Activated CD4-positive, alpha-beta T cell treated with anti-CD3 and anti-CD28 coated beads for 36 hours (primary cell): ENCODE measurements at regions of chr1 and their contacts with region 1.

Region 1: GRCh38 chr1:40979233-40980067 is at the start of gene CTPS1:
- DNase-seq: peak; percentile 98
- ATAC-seq: peak; percentile 86
- H3K4me3 Mint-ChIP-seq: peak within 1 kb of the TSS; percentile 86
- H3K27ac Mint-ChIP-seq: peak within 1 kb of the TSS; percentile 95
- H3K4me1 Mint-ChIP-seq: peaks cover 47% of the 10 kb centered on the region
- H3K27me3 Mint-ChIP-seq: no peaks in the 10 kb centered on the region
- total RNA-seq, gene CTPS1: 89.5 to 106 TPM

Region 2: GRCh38 chr1:40385437-40386358 is 593.8 kb before region 1 on chr1:
- CTCF ChIA-PET with region 1: no interaction called
- POLR2A ChIA-PET with region 1: no interaction called
- intact Hi-C with region 1: loop called in 1 of 2 experiments (anchors 5 kb)
- DNase-seq: peak; percentile 77
- ATAC-seq: peak; percentile 63
- H3K4me3 Mint-ChIP-seq: peak overlapping the region; percentile 74
- H3K27ac Mint-ChIP-seq: peak overlapping the region; percentile 100
- H3K4me1 Mint-ChIP-seq: peaks cover 94% of the 10 kb centered on the region
- H3K27me3 Mint-ChIP-seq: no peaks in the 10 kb centered on the region

Region 3: DNA sequence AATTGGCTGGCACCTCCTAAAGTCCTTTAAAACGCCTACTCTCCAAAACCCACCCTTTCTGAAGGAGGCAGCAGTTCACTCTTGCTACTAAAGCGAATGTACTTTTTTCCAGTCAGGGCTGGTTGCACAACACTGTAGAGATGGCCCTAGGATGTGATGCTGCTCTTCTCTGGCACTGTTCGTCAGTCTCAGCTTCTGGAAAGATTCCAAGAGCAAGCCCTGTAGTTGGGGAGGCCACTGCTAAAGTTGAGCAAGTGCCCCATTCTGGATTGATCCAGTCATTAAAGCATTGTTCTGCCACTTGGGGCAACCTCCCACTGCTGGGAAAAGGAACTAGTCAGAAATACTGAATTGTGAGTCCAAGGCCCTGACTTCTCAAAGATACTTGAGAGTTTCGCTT is 224.4 kb before region 1 on chr1:
- CTCF ChIA-PET with region 1: no interaction called
- POLR2A ChIA-PET with region 1: no interaction called
- intact Hi-C with region 1: loop called in 1 of 2 experiments (anchors 1 kb)
- DNase-seq: no peak
- ATAC-seq: no peak
- H3K4me3 Mint-ChIP-seq: no peak overlapping the region
- H3K27ac Mint-ChIP-seq: no peak overlapping the region
- H3K4me1 Mint-ChIP-seq: peaks cover 27% of the 10 kb centered on the region
- H3K27me3 Mint-ChIP-seq: no peaks in the 10 kb centered on the region

Region 4: GRCh38 chr1:40951943-40952743 is 27.3 kb before region 1 on chr1:
- CTCF ChIA-PET with region 1: interaction called, 10 read pairs
- POLR2A ChIA-PET with region 1: no interaction called
- intact Hi-C with region 1: no loop called
- DNase-seq: peak; percentile 75
- ATAC-seq: peak; percentile 72
- H3K4me3 Mint-ChIP-seq: no peak overlapping the region
- H3K27ac Mint-ChIP-seq: no peak overlapping the region
- H3K4me1 Mint-ChIP-seq: no peaks in the 10 kb centered on the region
- H3K27me3 Mint-ChIP-seq: peaks cover 25% of the 10 kb centered on the region

Region 5: GRCh38 chr1:41241782-41242341 is 262.4 kb after region 1 on chr1 and contains the start of gene SCMH1:
- CTCF ChIA-PET with region 1: no interaction called
- POLR2A ChIA-PET with region 1: no interaction called
- intact Hi-C with region 1: loop called in 1 of 2 experiments (anchors 2 kb)
- DNase-seq: peak; percentile 74
- ATAC-seq: peak; percentile 59
- H3K4me3 Mint-ChIP-seq: peak within 1 kb of the TSS; percentile 73
- H3K27ac Mint-ChIP-seq: peak within 1 kb of the TSS; percentile 85
- H3K4me1 Mint-ChIP-seq: peaks cover 27% of the 10 kb centered on the region
- H3K27me3 Mint-ChIP-seq: peaks cover 5% of the 10 kb centered on the region
- total RNA-seq, gene SCMH1: 23.7 to 31.0 TPM